ENCODE measurements at regions of chr1 and their contacts with region 1.

Region 1: DNA sequence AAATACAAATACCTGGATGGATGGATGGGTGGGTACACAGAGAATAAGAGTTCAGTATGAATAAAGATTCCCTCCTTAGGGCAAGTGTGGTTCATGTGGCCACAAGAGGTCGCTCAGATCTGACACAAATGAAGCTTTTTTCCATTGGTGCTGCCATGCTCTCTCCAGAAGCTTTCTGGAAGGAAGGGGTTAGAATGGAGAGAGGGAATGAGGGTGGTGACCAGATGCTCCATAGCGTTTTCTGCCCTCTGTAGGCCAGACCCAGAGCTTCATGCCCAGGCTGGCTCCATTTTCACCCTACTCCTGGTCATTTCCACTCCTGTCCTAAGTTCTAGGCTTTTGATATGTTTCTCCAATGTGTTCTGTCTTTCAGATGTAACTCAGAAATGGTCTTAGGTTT is 3.3 kb upstream of the FCRL6 start:
- DNase-seq: peak; percentile 70
- H3K4me3 ChIP-seq: no peak overlapping the region
- CTCF ChIP-seq: peak; percentile 77

Region 2: DNA sequence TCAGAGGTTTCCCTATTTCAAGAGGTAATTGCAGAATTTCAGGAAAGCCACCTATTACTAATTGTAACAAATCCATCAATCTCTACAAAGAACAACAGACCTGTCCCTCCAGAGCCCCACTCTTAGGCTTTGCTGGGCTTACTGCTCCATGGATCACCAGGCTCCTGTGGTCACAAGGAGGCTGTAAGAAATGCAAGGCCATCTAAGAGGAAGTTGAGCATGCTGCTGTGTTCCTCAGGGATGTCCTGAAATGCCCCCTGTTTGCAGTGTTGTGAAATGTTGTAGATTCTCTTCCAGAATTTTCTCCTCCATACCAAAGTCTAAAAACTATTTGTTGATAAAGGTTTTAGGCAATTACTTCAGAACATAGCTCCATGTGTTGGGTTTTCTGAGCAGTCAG is 42.5 kb before region 1 on chr1:
- in situ Hi-C with region 1: no loop called
- DNase-seq: no peak
- H3K4me3 ChIP-seq: no peak overlapping the region
- CTCF ChIP-seq: no peak

Region 3: GRCh38 chr1:159891275-159892157 is 92.6 kb after region 1 on chr1:
- in situ Hi-C with region 1: loop called (anchors 5 kb)
- DNase-seq: peak; percentile 79
- H3K4me3 ChIP-seq: no peak overlapping the region
- CTCF ChIP-seq: peak; percentile 97

Region 4: DNA sequence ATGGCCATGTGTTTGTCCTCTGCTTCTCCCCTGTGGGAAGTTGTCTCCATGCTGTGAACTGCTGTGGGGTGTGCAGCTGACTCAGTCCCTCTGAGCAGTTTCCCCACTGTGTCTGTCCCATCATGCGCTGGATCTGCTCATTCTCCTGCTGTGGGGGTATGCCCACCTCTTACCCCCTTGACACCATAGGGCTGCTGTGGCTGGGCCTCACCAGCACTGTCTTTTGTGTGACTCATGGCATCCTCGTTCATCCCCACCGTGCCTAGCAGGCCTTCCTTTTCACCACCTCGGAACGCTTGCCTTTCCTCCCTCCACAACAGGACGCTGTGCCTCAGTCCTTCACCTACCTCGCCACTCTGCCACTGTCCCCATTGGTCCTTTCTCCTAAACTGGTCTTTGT is 628.7 kb after region 1 on chr1:
- in situ Hi-C with region 1: no loop called
- DNase-seq: no peak
- H3K4me3 ChIP-seq: no peak overlapping the region
- CTCF ChIP-seq: no peak